Activated CD8-positive, alpha-beta T cell treated with anti-CD3 and anti-CD28 coated beads for 36 hours (primary cell): ENCODE measurements at regions of chr7 and their contacts with region 1.

Region 1: DNA sequence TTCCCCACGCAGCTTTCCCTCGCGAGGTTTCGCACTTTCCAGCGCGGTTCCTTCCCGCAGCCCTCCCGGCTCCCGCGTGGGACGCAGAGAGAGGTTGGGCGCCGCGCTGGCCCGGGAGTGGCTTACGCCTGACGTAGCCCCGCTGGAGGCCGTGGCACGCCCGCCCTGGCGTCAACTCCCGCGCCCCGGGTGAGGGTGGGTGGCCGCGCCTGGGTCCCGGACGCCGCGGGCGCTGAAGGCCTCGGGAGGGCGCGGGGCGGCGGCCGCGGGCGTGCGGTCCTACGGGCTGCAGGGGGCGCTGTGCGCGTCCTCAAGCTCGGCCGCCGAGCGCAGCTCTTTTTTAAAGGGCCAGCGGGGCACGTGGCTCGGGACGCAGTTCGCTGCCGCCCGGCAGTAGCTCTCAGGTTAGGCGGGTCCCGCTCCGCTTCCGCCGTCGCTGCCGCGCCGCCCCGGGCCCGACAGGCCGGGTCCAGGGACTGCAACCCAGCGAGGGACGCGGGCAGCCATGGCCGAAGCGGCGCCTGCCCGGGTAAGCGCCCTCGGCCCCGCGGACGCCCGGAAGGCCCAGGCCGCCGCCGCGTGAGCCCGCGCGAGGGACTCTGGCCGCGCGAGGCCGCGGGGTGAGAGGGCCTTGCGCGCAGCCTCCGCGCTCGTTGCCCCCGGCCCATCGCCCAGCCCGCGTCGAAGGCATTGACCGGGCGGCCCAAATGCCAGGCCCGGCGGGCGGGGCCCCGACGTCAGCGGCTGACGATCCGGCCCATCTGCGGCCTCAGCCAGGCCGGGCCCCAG is at the start of gene ZNF783:
- DNase-seq: peak; percentile 89
- ATAC-seq: peak; percentile 87
- H3K4me3 Mint-ChIP-seq: peak within 1 kb of the TSS; percentile 75
- H3K27ac Mint-ChIP-seq: peak within 1 kb of the TSS; percentile 87
- H3K4me1 Mint-ChIP-seq: peaks cover 29% of the 10 kb centered on the region
- H3K27me3 Mint-ChIP-seq: no peaks in the 10 kb centered on the region
- CTCF ChIP-seq: peak; percentile 92
- total RNA-seq, gene ZNF783: 13.2 to 13.4 TPM

Region 2: GRCh38 chr7:149248777-149249176 is 13.2 kb before region 1 on chr7:
- CTCF ChIA-PET with region 1: interaction called, 34 read pairs
- POLR2A ChIA-PET with region 1: interaction called, 11 read pairs
- intact Hi-C with region 1: no loop called
- DNase-seq: peak; percentile 59
- ATAC-seq: peak; percentile 69
- H3K4me3 Mint-ChIP-seq: peak overlapping the region; percentile 47
- H3K27ac Mint-ChIP-seq: peak overlapping the region; percentile 95
- H3K4me1 Mint-ChIP-seq: peaks cover 43% of the 10 kb centered on the region
- H3K27me3 Mint-ChIP-seq: no peaks in the 10 kb centered on the region
- CTCF ChIP-seq: no peak

Region 3: GRCh38 chr7:149278396-149279045 is 16.5 kb after region 1 on chr7:
- CTCF ChIA-PET with region 1: interaction called, 30 read pairs
- POLR2A ChIA-PET with region 1: interaction called, 4 read pairs
- intact Hi-C with region 1: no loop called
- DNase-seq: no peak
- ATAC-seq: no peak
- H3K4me3 Mint-ChIP-seq: no peak overlapping the region
- H3K27ac Mint-ChIP-seq: no peak overlapping the region
- H3K4me1 Mint-ChIP-seq: no peaks in the 10 kb centered on the region
- H3K27me3 Mint-ChIP-seq: no peaks in the 10 kb centered on the region
- CTCF ChIP-seq: no peak

Region 4: GRCh38 chr7:149284850-149285626 is 23.0 kb after region 1 on chr7:
- CTCF ChIA-PET with region 1: interaction called, 30 read pairs
- POLR2A ChIA-PET with region 1: interaction called, 9 read pairs
- intact Hi-C with region 1: no loop called
- DNase-seq: peak; percentile 98
- ATAC-seq: peak; percentile 98
- H3K4me3 Mint-ChIP-seq: peak overlapping the region; percentile 86
- H3K27ac Mint-ChIP-seq: peak overlapping the region; percentile 80
- H3K4me1 Mint-ChIP-seq: peaks cover 32% of the 10 kb centered on the region
- H3K27me3 Mint-ChIP-seq: no peaks in the 10 kb centered on the region
- CTCF ChIP-seq: no peak